MCF 10A (cell line): ENCODE measurements at regions of chr21 and their contacts with region 1.

Region 1: DNA sequence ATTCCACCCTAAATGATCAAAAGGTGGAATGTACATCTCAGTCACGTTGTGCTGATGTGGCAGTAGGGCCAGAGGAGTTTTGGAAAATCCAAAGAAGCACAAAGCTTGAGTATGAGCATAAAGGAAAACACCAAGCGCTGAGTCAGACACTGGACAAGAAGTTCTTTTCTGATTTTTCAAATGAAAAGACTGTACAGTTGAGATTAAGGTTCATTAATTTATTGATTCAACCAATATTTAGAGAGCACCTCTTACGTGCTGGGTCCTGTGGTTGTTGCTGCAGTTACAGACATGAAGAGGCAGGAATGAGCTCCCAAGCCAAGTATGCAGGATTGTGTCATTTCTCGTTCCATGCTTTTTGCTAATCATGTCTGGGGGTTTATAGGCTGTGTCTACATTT is 28.9 kb upstream of the APP start:
- DNase-seq: peak; percentile 46
- H3K4me3 Mint-ChIP-seq: peak overlapping the region; percentile 27
- H3K27ac Mint-ChIP-seq: peak overlapping the region; percentile 71
- H3K4me1 Mint-ChIP-seq: peaks cover 12% of the 10 kb centered on the region
- H3K27me3 Mint-ChIP-seq: no peaks in the 10 kb centered on the region
- CTCF ChIP-seq: no peak

Region 2: DNA sequence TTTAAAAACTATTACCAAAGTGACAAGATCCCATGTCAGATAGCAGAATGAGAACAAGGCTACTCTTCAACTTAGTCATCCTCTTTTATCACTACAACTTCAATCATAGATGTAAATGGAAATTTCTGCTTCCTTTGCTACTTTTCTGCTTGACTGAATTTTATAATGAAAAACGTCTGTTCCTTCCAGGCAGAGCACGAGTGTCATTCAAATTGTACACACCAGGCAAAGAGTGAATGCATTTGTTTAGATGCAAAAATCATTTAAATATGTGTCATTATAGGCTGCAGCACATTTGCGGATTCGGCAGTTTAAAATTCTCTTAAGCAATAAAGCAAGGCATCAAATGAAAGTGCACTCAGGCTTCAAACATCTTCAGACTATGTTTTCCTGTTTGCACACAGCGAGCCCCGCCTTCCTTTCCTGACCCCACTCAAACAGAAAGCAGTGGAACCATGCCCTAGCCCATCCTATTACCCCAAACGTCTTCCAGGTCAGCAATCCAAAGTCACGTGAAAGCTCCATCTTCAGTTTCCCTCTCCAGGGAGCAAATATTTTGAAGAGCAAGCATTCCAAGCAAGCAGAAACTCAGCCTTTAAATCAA is 128.5 kb before region 1 on chr21:
- CTCF ChIA-PET with region 1: no interaction called
- POLR2A ChIA-PET with region 1: no interaction called
- intact Hi-C with region 1: no loop called
- DNase-seq: no peak
- H3K4me3 Mint-ChIP-seq: no peak overlapping the region
- H3K27ac Mint-ChIP-seq: no peak overlapping the region
- H3K4me1 Mint-ChIP-seq: peaks cover 38% of the 10 kb centered on the region
- H3K27me3 Mint-ChIP-seq: no peaks in the 10 kb centered on the region
- CTCF ChIP-seq: no peak

Region 3: GRCh38 chr21:26469789-26470188 is 270.3 kb after region 1 on chr21:
- CTCF ChIA-PET with region 1: interaction called, 3 read pairs
- POLR2A ChIA-PET with region 1: no interaction called
- intact Hi-C with region 1: loop called (anchors 10 kb)
- DNase-seq: peak; percentile 74
- H3K4me3 Mint-ChIP-seq: no peak overlapping the region
- H3K27ac Mint-ChIP-seq: peak overlapping the region; percentile 80
- H3K4me1 Mint-ChIP-seq: peaks cover 12% of the 10 kb centered on the region
- H3K27me3 Mint-ChIP-seq: no peaks in the 10 kb centered on the region
- CTCF ChIP-seq: no peak